Transverse colon (tissue), 4 donors: ENCODE measurements at regions of chr3 and their contacts with region 1.

Region 1: DNA sequence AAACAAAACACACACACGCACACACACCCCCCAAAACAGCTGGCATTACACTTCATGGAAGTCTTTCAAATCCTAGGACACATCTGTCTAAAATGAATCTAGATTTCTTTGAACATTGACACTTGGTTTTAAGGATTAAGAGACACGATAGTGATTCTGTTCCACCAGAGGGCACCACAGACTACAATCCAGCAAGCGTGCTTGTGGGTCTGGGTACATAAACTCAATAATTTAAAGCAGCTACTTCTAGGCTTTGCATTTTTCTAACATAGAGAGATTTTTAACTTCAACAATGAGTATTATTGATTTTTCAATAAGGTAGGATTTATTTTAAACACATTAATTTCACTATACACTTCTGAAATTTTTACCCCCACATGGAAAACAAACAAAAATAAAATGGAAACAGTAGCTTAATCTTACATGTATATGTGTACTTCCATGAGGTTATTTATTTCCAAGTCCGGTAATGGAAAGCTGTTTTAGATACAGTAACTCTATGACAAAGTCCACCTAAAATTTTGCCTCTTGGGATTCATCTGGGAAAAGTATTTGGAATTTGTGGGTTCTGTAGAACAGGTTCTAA is 564.0 kb upstream of the TGFBR2 start:
- DNase-seq: peak; percentile 68
- H3K4me3 ChIP-seq: no peak overlapping the region
- H3K27ac ChIP-seq: no peak overlapping the region
- H3K4me1 ChIP-seq: peaks cover 0 to 4% (median 0%) of the 10 kb centered on the region in 4 donors
- H3K27me3 ChIP-seq: no peaks in the 10 kb centered on the region
- CTCF ChIP-seq: peak; percentile 65 to 83 (median 77)
- EP300 ChIP-seq: no peak
- POLR2A ChIP-seq: no peak

Region 2: GRCh38 chr3:29718661-29719065 is 323.7 kb before region 1 on chr3:
- in situ Hi-C with region 1: no loop called
- intact Hi-C with region 1: no loop called
- DNase-seq: no peak
- H3K4me3 ChIP-seq: no peak overlapping the region
- H3K27ac ChIP-seq: no peak overlapping the region
- H3K4me1 ChIP-seq: no peaks in the 10 kb centered on the region
- H3K27me3 ChIP-seq: no peaks in the 10 kb centered on the region
- CTCF ChIP-seq: no peak
- EP300 ChIP-seq: no peak
- POLR2A ChIP-seq: no peak

Region 3: DNA sequence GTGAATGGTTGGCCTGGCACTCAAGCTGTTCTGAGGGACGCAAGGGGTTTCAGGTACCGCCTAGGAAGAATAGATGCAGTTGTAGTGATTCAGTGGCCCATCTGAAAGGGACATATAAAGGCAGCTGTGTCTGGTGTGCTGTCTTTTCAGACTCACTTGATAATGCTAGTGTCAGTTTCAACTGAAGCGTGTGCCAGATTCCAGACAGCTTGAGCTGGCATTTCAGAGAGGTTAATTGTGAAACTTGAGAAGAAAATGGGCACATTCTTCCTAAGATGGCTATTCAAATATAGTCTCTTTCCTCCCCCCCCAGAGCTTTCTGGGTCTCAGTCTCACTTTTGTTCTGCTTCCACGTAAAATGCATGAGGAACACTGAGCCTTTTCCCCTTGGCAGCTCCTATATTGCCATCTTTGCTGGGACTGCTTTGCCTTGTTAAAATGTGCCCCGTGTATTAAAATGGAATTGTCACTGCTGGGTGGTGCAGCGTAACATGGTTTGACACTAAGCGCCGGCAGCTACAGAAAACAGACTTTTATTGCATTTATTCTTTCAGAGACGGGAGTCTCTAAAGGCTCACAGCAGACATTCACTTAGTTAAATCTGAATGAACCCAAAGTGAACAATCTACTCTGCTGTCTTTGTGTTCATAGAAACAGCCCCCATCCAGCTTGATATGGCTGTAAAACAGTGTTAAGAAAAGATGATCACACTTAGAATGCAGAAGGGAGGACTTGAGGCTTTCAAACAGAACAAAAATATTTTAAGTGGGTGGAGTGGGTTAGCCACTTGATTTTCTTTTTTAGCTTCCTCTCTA is 282.7 kb before region 1 on chr3:
- in situ Hi-C with region 1: no loop called
- intact Hi-C with region 1: no loop called
- DNase-seq: no peak
- H3K4me3 ChIP-seq: no peak overlapping the region
- H3K27ac ChIP-seq: peak overlapping the region; percentile 44 to 70 (median 62)
- H3K4me1 ChIP-seq: peaks cover 0 to 38% (median 4%) of the 10 kb centered on the region in 4 donors
- H3K27me3 ChIP-seq: no peaks in the 10 kb centered on the region
- CTCF ChIP-seq: no peak
- EP300 ChIP-seq: no peak
- POLR2A ChIP-seq: no peak

Region 4: GRCh38 chr3:29991198-29991597 is 51.2 kb before region 1 on chr3:
- in situ Hi-C with region 1: no loop called
- intact Hi-C with region 1: no loop called
- DNase-seq: no peak
- H3K4me3 ChIP-seq: no peak overlapping the region
- H3K27ac ChIP-seq: no peak overlapping the region
- H3K4me1 ChIP-seq: no peaks in the 10 kb centered on the region
- H3K27me3 ChIP-seq: no peaks in the 10 kb centered on the region
- CTCF ChIP-seq: no peak
- EP300 ChIP-seq: no peak
- POLR2A ChIP-seq: no peak

Region 5: DNA sequence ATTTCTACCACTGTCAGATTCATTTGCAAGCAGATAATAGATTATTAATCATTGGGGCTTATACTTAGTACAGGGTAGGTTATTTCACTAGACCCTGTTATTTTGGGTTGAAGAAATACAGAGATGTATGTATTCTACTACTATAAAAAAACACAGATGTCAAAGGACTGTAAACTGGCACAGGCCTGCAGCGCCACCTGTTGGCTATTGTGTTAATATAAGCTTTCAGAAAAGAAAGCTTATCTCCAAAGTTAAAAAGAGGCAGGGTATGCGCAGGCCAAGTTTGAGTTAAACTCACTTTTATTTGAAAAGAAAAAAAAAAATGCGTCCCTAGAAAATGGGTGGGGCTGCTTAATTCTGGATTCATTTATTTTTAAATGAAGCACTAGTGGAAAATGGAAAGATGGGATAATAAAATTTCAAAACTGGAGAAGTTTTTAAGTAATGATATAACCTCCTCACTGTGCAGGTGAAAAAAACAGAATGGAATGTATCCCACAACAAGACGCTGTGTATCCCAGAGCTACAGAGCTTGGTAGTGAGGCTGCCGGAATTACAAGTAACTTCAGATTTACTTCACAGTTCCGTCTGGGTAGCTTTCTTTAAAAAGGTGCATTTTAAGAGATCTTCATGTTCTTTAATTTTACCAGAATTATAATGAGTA is 156.9 kb after region 1 on chr3:
- in situ Hi-C with region 1: loop called (anchors 5 to 25 kb)
- intact Hi-C with region 1: no loop called
- DNase-seq: peak; percentile 76
- H3K4me3 ChIP-seq: no peak overlapping the region
- H3K27ac ChIP-seq: no peak overlapping the region
- H3K4me1 ChIP-seq: peaks cover 0 to 8% (median 0%) of the 10 kb centered on the region in 4 donors
- H3K27me3 ChIP-seq: no peaks in the 10 kb centered on the region
- CTCF ChIP-seq: peak; percentile 81 to 89 (median 83)
- EP300 ChIP-seq: no peak
- POLR2A ChIP-seq: no peak

Region 6: GRCh38 chr3:30747771-30748281 is 705.5 kb after region 1 on chr3:
- in situ Hi-C with region 1: loop called in 1 of 4 experiments (anchors 25 kb)
- intact Hi-C with region 1: no loop called
- DNase-seq: no peak
- H3K4me3 ChIP-seq: no peak overlapping the region
- H3K27ac ChIP-seq: no peak overlapping the region
- H3K4me1 ChIP-seq: peaks cover 0 to 11% (median 5%) of the 10 kb centered on the region in 4 donors
- H3K27me3 ChIP-seq: no peaks in the 10 kb centered on the region
- CTCF ChIP-seq: peak; percentile 30 to 41 (median 36)
- EP300 ChIP-seq: no peak
- POLR2A ChIP-seq: no peak

Region 7: GRCh38 chr3:31132132-31132769 is 1089.9 kb after region 1 on chr3:
- in situ Hi-C with region 1: loop called in 1 of 4 experiments (anchors 25 kb)
- intact Hi-C with region 1: no loop called
- DNase-seq: no peak
- H3K4me3 ChIP-seq: no peak overlapping the region
- H3K27ac ChIP-seq: no peak overlapping the region
- H3K4me1 ChIP-seq: no peaks in the 10 kb centered on the region
- H3K27me3 ChIP-seq: no peaks in the 10 kb centered on the region
- CTCF ChIP-seq: peak in 4 of 5 experiments; percentile 14 to 44 (median 21)
- EP300 ChIP-seq: no peak
- POLR2A ChIP-seq: no peak